ENCODE measurements at regions of chr13 and their contacts with region 1.

Region 1: DNA sequence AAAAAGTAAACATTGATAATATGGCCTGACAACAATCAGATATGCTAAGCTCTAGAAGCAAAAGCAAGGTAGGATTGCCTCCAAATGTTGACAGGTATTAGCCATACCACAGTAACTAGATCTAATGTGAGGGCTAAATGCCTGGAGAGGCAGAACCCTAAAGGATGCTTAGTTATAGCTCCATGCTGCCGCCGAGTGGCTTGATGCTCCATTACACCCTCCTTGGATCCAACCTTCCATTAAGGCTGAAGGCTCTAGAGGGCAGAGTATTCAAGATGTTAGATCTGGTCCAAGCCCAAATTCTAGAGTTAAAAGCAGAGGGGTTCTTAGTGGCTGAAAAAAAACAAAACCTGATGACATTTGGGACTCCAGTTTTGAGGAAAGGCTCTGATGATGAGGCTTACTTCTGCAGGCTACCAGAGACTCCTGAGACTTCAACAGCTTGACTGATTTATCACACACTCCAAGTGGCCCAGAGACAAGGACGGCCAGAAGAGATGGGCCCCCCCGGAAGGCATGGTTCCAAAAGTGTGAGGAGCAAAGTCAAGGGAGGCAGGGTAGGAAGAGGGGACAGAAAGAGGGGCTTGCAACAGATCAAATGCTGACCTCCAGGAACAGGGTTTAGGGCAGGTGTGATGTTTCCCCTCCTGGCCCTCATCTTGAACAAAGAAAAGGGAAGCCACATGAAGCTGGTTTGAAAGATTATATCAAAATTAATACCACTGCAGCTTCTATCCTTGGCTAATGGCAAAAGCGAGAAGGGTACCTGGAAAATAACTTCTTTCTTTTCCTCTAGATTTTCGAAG is 21.9 kb upstream of the CPB2 start:
- DNase-seq: peak; percentile 45 to 82 (median 72)
- ATAC-seq: peak; percentile 95
- H3K4me3 ChIP-seq: no peak overlapping the region
- H3K4me3 Mint-ChIP-seq: no peak overlapping the region
- H3K27ac ChIP-seq: peak overlapping the region in 1 of 2 experiments; percentile 69
- H3K27ac Mint-ChIP-seq: peak overlapping the region; percentile 77
- H3K4me1 ChIP-seq: peaks cover 30% of the 10 kb centered on the region
- H3K4me1 Mint-ChIP-seq: peaks cover 55% of the 10 kb centered on the region
- H3K27me3 ChIP-seq: no peaks in the 10 kb centered on the region
- H3K27me3 Mint-ChIP-seq: no peaks in the 10 kb centered on the region
- CTCF ChIP-seq: peak; percentile 80

Region 2: DNA sequence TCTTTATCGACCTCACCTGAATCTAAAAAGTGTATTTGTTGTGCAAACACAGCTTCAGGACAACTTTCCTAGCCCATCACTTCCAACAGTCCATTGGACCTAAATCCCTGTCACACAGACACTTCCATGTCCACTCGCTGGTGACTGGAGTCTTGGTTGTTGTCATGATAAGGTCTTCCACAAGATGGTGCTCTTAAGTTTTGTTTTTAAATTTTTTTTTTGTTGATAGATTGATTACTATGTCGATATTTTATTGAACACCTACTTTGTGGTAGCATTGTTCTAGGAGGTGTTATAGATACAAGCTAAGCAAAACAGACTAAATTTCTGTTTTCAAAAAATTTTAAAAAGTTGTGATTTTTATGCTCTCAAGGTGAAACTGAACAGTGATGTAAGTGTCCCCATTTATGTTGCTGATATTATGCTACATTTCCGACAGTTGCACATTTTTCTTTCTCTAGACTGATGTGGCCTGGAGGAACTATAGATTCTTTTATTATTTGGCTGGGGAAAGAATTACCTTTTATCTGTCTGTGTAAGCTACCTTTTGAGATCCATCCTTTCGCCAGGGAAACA is 503.2 kb before region 1 on chr13:
- CTCF ChIA-PET with region 1: interaction called, 4 read pairs
- POLR2A ChIA-PET with region 1: no interaction called
- intact Hi-C with region 1: loop called in 1 of 2 experiments (anchors 5 kb)
- DNase-seq: peak in 2 of 9 experiments; percentile 21 to 34
- ATAC-seq: no peak
- H3K4me3 ChIP-seq: no peak overlapping the region
- H3K4me3 Mint-ChIP-seq: no peak overlapping the region
- H3K27ac ChIP-seq: no peak overlapping the region
- H3K27ac Mint-ChIP-seq: no peak overlapping the region
- H3K4me1 ChIP-seq: peaks cover 5% of the 10 kb centered on the region
- H3K4me1 Mint-ChIP-seq: peaks cover 2% of the 10 kb centered on the region
- H3K27me3 ChIP-seq: no peaks in the 10 kb centered on the region
- H3K27me3 Mint-ChIP-seq: peaks cover 27% of the 10 kb centered on the region
- CTCF ChIP-seq: peak; percentile 53

Region 3: DNA sequence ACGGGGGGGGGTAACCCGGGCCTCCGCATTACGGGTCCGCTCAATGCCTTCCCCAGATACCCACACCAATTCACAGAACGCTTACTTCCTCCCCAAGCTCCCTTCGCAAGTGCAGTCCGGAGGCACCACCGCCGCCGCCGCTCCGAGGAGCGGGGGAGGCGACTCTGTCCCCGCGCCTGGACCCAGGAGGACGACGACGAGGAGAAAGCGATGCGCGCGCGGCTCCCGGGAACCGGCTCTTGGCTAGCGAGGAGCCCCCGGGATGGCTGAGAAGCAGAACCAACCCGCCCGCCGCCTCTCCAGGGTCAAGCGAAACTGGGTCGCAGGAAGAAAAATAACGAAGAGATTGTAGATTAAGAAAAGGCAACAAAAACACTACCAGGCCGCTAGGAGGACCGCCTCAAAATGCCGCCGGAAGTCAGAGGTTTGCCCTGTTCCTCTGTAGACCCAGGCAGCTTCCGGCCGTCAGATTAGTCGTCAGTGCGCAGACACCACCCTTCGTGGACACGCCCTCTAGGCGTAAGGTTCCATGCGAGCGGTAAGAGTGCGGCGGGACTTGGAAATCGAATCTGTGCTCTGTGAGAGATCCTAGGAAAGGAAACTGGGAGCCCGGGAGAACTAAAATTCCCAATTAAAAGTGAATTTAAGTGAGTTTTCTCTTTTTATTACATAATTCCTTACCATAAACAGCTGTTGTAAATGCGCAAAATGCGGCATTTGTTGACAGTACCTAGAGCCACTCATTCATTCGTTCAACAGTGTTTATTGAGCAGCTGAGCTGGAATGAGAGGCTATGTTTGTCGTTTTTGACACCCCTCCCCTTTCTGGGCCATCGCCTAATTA is 74.2 kb before region 1 on chr13 and contains the start of gene ZC3H13:
- CTCF ChIA-PET with region 1: interaction called, 4 read pairs
- POLR2A ChIA-PET with region 1: interaction called, 4 read pairs
- intact Hi-C with region 1: loop called (anchors 2 to 5 kb)
- DNase-seq: peak; percentile 84 to 97 (median 91)
- ATAC-seq: peak; percentile 97
- H3K4me3 ChIP-seq: peak within 1 kb of the TSS; percentile 77 to 89
- H3K4me3 Mint-ChIP-seq: peak within 1 kb of the TSS; percentile 88
- H3K27ac ChIP-seq: peak within 1 kb of the TSS; percentile 89 to 98
- H3K27ac Mint-ChIP-seq: peak within 1 kb of the TSS; percentile 94
- H3K4me1 ChIP-seq: peaks cover 23% of the 10 kb centered on the region
- H3K4me1 Mint-ChIP-seq: peaks cover 46% of the 10 kb centered on the region
- H3K27me3 ChIP-seq: no peaks in the 10 kb centered on the region
- H3K27me3 Mint-ChIP-seq: peaks cover 6% of the 10 kb centered on the region
- CTCF ChIP-seq: peak; percentile 37
- total RNA-seq, gene ZC3H13: 50.7 to 54.2 TPM

Region 4: GRCh38 chr13:46146899-46147298 is 20.1 kb after region 1 on chr13:
- CTCF ChIA-PET with region 1: interaction called, 10 read pairs
- POLR2A ChIA-PET with region 1: interaction called, 3 read pairs
- intact Hi-C with region 1: no loop called
- DNase-seq: no peak
- ATAC-seq: no peak
- H3K4me3 ChIP-seq: no peak overlapping the region
- H3K4me3 Mint-ChIP-seq: no peak overlapping the region
- H3K27ac ChIP-seq: no peak overlapping the region
- H3K27ac Mint-ChIP-seq: no peak overlapping the region
- H3K4me1 ChIP-seq: peaks cover 7% of the 10 kb centered on the region
- H3K4me1 Mint-ChIP-seq: peaks cover 29% of the 10 kb centered on the region
- H3K27me3 ChIP-seq: no peaks in the 10 kb centered on the region
- H3K27me3 Mint-ChIP-seq: no peaks in the 10 kb centered on the region
- CTCF ChIP-seq: no peak

Region 5: DNA sequence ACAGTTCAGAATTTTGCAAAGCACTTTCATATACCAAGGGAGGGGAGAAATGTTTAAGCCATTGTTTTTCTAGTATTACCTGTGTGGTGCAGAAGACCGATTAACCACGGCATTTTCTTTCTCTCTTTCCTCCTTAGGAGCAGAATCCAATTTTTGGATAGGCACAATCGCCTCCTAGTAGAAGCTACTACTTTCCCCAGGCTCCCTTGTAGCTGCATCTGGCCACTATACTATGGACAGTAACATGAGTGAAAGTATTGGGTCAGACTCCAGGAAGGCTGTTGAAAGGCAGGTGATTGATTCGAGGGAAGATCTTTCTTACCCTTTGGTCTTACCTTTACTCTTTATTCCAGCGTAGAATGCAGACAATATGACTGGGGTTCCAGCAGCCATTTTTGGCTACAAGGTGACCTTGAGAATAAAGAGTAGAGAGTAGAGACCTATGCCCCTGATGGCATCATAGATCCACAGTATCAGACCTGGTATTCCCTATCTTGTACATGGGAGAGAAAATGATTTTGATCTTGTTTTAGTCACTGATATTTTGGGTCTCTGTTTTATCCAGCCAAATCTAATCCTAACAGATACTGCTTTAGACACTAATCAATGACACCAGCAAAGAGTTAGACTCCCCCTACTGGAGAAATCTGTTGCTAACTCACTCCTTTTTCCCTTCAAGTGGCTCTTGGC is 162.0 kb after region 1 on chr13:
- CTCF ChIA-PET with region 1: interaction called, 8 read pairs
- POLR2A ChIA-PET with region 1: no interaction called
- intact Hi-C with region 1: loop called in 1 of 2 experiments (anchors 2 kb)
- DNase-seq: peak in 2 of 9 experiments; percentile 70 to 79
- ATAC-seq: peak; percentile 96
- H3K4me3 ChIP-seq: no peak overlapping the region
- H3K4me3 Mint-ChIP-seq: no peak overlapping the region
- H3K27ac ChIP-seq: no peak overlapping the region
- H3K27ac Mint-ChIP-seq: no peak overlapping the region
- H3K4me1 ChIP-seq: peaks cover 7% of the 10 kb centered on the region
- H3K4me1 Mint-ChIP-seq: peaks cover 19% of the 10 kb centered on the region
- H3K27me3 ChIP-seq: no peaks in the 10 kb centered on the region
- H3K27me3 Mint-ChIP-seq: no peaks in the 10 kb centered on the region
- CTCF ChIP-seq: peak; percentile 89